ENCODE measurements at regions of chr7 and their contacts with region 1.

Region 1: DNA sequence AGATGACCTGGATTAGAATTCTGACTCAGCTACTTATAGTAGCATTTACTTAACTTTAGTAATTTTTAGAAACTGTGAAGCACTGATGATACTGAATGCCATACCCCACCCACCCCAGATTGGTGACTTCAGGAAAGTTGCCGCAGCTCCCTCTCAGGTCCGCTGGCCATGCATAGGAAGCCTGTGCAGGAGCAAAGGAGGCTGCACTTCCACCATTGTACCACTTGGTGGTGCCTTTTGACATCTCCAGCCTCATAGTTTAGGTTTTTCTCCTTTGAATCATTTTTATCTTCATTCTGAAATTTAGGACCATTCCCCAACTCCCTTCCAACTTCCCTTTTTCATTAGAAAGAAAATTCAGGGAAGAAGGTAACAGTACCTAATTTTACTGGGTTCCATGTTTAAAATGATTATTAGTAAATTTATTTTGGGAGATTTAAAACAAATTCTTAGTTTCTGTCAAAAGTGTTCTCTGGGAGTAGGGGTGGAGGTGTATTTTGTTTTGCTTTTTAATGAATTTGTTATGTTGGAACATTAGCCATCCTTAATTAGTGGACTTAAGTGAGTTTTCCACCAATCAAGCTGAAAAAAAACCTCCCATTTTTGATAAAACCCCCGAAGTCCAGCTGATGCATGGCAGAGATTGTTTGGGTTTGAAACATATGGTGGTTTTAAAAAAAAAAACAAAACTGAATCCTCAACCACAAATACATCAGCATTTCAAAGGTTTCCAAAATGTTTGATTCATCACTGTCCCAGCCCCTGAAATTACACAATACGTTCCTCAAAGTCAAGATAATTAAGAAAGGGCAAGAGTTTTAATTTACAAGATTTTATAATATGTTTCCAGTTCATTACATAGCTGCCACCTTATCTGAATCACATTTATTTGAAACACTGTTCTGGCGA is 109.6 kb downstream of the WNT2 start:
- DNase-seq: peak; percentile 42
- ATAC-seq: peak; percentile 92
- H3K4me3 ChIP-seq: no peak overlapping the region
- H3K27ac ChIP-seq: no peak overlapping the region
- H3K4me1 ChIP-seq: no peaks in the 10 kb centered on the region
- H3K27me3 ChIP-seq: no peaks in the 10 kb centered on the region
- CTCF ChIP-seq: peak; percentile 77
- EP300 ChIP-seq: no peak
- POLR2A ChIP-seq: no peak
- RAD21 ChIP-seq: 0 out of 2 replicates have a peak, but pooled peaks have one; percentile 15

Region 2: DNA sequence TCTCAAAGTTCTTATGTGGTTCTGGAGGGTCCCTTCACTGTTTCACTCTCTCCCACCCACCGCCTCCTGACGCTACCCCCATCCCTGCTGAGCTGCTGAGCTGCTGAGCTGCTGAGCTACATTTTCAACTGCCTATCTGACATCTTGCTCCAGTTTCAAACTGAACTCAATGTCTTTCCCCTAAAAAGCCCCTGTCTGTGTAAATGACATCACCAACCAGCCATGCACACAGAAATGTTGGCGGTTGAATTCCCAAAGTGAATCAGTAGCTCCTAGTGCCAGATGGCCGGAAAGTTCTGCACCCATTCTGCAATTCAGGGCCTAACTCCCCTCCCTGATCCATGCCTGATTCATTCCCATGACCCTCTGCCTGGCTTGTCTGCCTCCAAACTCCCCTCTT is 38.5 kb after region 1 on chr7:
- CTCF ChIA-PET with region 1: no interaction called
- POLR2A ChIA-PET with region 1: no interaction called
- in situ Hi-C with region 1: no loop called
- intact Hi-C with region 1: no loop called
- DNase-seq: no peak
- ATAC-seq: no peak
- H3K4me3 ChIP-seq: no peak overlapping the region
- H3K27ac ChIP-seq: no peak overlapping the region
- H3K4me1 ChIP-seq: no peaks in the 10 kb centered on the region
- H3K27me3 ChIP-seq: peaks cover 0 to 6% of the 10 kb centered on the region in 2 experiments; a peak in 2 of 5 replicates
- CTCF ChIP-seq: no peak
- EP300 ChIP-seq: no peak
- POLR2A ChIP-seq: no peak
- RAD21 ChIP-seq: no peak

Region 3: GRCh38 chr7:117385340-117386109 is 172.3 kb after region 1 on chr7:
- CTCF ChIA-PET with region 1: no interaction called
- POLR2A ChIA-PET with region 1: no interaction called
- in situ Hi-C with region 1: no loop called
- intact Hi-C with region 1: loop called (anchors 2 kb)
- DNase-seq: no peak
- ATAC-seq: peak; percentile 56; the same call in 2 of the 3 replicates
- H3K4me3 ChIP-seq: no peak overlapping the region
- H3K27ac ChIP-seq: no peak overlapping the region
- H3K4me1 ChIP-seq: no peaks in the 10 kb centered on the region
- H3K27me3 ChIP-seq: no peaks in the 10 kb centered on the region; a peak in 1 of 5 replicates
- CTCF ChIP-seq: peak; percentile 30
- EP300 ChIP-seq: no peak
- POLR2A ChIP-seq: no peak
- RAD21 ChIP-seq: no peak

Region 4: GRCh38 chr7:117470777-117471176 is 257.6 kb after region 1 on chr7:
- CTCF ChIA-PET with region 1: no interaction called
- POLR2A ChIA-PET with region 1: no interaction called
- in situ Hi-C with region 1: no loop called
- intact Hi-C with region 1: no loop called
- DNase-seq: no peak
- ATAC-seq: no peak
- H3K4me3 ChIP-seq: no peak overlapping the region
- H3K27ac ChIP-seq: no peak overlapping the region
- H3K4me1 ChIP-seq: no peaks in the 10 kb centered on the region
- H3K27me3 ChIP-seq: no peaks in the 10 kb centered on the region
- CTCF ChIP-seq: no peak
- EP300 ChIP-seq: no peak
- POLR2A ChIP-seq: no peak
- RAD21 ChIP-seq: no peak